Activated CD4-positive, alpha-beta memory T cell treated with anti-CD3 and anti-CD28 coated beads for 36 hours (primary cell): ENCODE measurements at regions of chr7 and their contacts with region 1.

Region 1: GRCh38 chr7:38369816-38370493 is 96.5 kb upstream of the TARP start:
- DNase-seq: peak; percentile 84
- H3K4me3 Mint-ChIP-seq: no peak overlapping the region
- H3K27ac Mint-ChIP-seq: peak overlapping the region; percentile 29
- H3K4me1 Mint-ChIP-seq: peaks cover 56% of the 10 kb centered on the region
- H3K27me3 Mint-ChIP-seq: no peaks in the 10 kb centered on the region

Region 2: DNA sequence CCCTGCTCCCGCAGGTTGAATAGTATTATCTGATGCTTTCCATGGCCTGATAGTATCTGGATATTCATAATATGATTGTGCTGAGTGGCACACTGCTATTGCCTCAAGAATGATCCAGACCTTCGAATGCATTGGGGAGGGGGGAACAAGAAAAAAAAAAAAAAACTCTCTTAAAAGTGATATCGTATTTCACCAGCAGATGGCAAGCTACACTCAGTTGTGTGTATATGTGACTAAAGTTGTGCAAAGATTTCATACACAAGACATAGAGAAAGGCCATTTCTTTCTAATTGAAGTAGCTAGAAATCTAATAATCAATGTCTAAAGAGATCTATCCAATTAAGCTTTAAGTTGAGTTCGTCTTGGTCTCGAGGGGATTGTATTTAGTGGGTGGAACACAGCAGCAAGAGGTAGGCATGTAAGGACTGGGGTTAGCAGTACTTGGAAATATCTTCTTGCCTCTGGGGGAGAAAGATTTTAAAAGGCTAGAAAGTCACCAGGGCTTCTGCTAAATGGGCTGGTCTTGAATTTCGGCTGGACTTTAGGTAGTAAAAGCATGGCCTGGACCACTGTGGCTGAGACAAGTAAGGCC is 468.6 kb before region 1 on chr7:
- CTCF ChIA-PET with region 1: interaction called, 3 read pairs
- POLR2A ChIA-PET with region 1: no interaction called
- intact Hi-C with region 1: loop called (anchors 5 kb)
- DNase-seq: no peak
- H3K4me3 Mint-ChIP-seq: no peak overlapping the region
- H3K27ac Mint-ChIP-seq: no peak overlapping the region
- H3K4me1 Mint-ChIP-seq: no peaks in the 10 kb centered on the region
- H3K27me3 Mint-ChIP-seq: peaks cover 6% of the 10 kb centered on the region

Region 3: DNA sequence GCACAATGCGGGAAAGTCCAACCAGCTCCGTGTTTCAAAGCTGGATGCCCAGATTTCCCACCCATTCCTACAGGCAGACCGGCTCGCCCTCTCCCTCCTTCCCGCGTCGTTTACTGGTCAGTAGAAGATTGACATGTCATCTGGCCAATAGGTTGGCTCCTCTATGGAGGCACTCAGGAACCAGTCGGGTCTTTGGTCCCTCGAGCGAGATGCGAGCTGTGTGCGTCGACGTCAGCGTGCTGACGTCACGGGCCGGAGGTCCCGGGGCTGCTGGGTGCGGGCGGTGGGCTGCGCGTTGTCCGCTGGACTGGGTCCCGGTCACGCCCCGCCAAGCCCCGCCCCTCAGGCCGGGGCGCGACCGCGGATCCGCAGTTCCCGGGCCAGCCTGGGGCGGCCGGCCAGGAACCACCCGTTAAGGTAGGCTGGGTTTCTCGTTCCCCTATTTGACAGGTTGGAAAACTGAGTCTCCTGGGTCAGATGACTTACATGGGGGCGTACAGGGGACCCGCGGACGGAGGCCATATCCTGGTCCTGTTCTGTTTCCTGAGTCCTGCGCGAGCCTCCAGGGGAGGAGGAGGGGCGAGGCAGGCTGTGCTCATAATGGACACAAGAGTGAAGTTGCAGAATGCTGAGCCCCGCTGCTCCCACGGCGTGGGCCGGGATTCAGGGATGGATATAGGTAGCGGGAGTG is 191.8 kb before region 1 on chr7 and contains the start of gene STARD3NL:
- CTCF ChIA-PET with region 1: interaction called, 12 read pairs
- POLR2A ChIA-PET with region 1: no interaction called
- intact Hi-C with region 1: loop called (anchors 2 kb)
- DNase-seq: peak; percentile 92
- H3K4me3 Mint-ChIP-seq: peak within 1 kb of the TSS; percentile 96
- H3K27ac Mint-ChIP-seq: peak within 1 kb of the TSS; percentile 90
- H3K4me1 Mint-ChIP-seq: peaks cover 32% of the 10 kb centered on the region
- H3K27me3 Mint-ChIP-seq: peaks cover 9% of the 10 kb centered on the region
- total RNA-seq, gene STARD3NL: 34.4 to 34.7 TPM

Region 4: GRCh38 chr7:38232502-38233366 is 137.2 kb before region 1 on chr7:
- CTCF ChIA-PET with region 1: interaction called, 43 read pairs
- POLR2A ChIA-PET with region 1: interaction called, 3 read pairs
- intact Hi-C with region 1: no loop called
- DNase-seq: peak; percentile 88
- H3K4me3 Mint-ChIP-seq: peak overlapping the region; percentile 44
- H3K27ac Mint-ChIP-seq: peak overlapping the region; percentile 77
- H3K4me1 Mint-ChIP-seq: peaks cover 44% of the 10 kb centered on the region
- H3K27me3 Mint-ChIP-seq: no peaks in the 10 kb centered on the region

Region 5: GRCh38 chr7:38335492-38336147 is 34.3 kb before region 1 on chr7:
- CTCF ChIA-PET with region 1: interaction called, 61 read pairs
- POLR2A ChIA-PET with region 1: no interaction called
- intact Hi-C with region 1: loop called (anchors 1 kb)
- DNase-seq: peak; percentile 89
- H3K4me3 Mint-ChIP-seq: peak overlapping the region; percentile 69
- H3K27ac Mint-ChIP-seq: peak overlapping the region; percentile 83
- H3K4me1 Mint-ChIP-seq: peaks cover 39% of the 10 kb centered on the region
- H3K27me3 Mint-ChIP-seq: no peaks in the 10 kb centered on the region

Region 6: GRCh38 chr7:38524786-38525185 is 154.8 kb after region 1 on chr7:
- CTCF ChIA-PET with region 1: no interaction called
- POLR2A ChIA-PET with region 1: no interaction called
- intact Hi-C with region 1: no loop called
- DNase-seq: no peak
- H3K4me3 Mint-ChIP-seq: no peak overlapping the region
- H3K27ac Mint-ChIP-seq: no peak overlapping the region
- H3K4me1 Mint-ChIP-seq: no peaks in the 10 kb centered on the region
- H3K27me3 Mint-ChIP-seq: peaks cover 3% of the 10 kb centered on the region

Region 7: GRCh38 chr7:38660427-38661099 is 290.6 kb after region 1 on chr7:
- CTCF ChIA-PET with region 1: interaction called, 11 read pairs
- POLR2A ChIA-PET with region 1: no interaction called
- intact Hi-C with region 1: no loop called
- DNase-seq: peak; percentile 34
- H3K4me3 Mint-ChIP-seq: no peak overlapping the region
- H3K27ac Mint-ChIP-seq: no peak overlapping the region
- H3K4me1 Mint-ChIP-seq: no peaks in the 10 kb centered on the region
- H3K27me3 Mint-ChIP-seq: peaks cover 10% of the 10 kb centered on the region